ENCODE measurements at regions of chr6 and their contacts with region 1.

Region 1: GRCh38 chr6:134174672-134175198 is 122.3 kb upstream of the SLC2A12 start:
- DNase-seq: peak; percentile 94
- ATAC-seq: peak; percentile 81
- H3K4me3 Mint-ChIP-seq: peak overlapping the region; percentile 98
- H3K27ac Mint-ChIP-seq: peak overlapping the region; percentile 98
- H3K4me1 Mint-ChIP-seq: peaks cover 64% of the 10 kb centered on the region
- H3K27me3 Mint-ChIP-seq: no peaks in the 10 kb centered on the region
- CTCF ChIP-seq: no peak

Region 2: GRCh38 chr6:134185277-134185676 is 10.5 kb after region 1 on chr6:
- CTCF ChIA-PET with region 1: no interaction called
- POLR2A ChIA-PET with region 1: no interaction called
- intact Hi-C with region 1: no loop called
- DNase-seq: no peak
- ATAC-seq: no peak
- H3K4me3 Mint-ChIP-seq: no peak overlapping the region
- H3K27ac Mint-ChIP-seq: no peak overlapping the region
- H3K4me1 Mint-ChIP-seq: peaks cover 9% of the 10 kb centered on the region
- H3K27me3 Mint-ChIP-seq: no peaks in the 10 kb centered on the region
- CTCF ChIP-seq: no peak

Region 3: DNA sequence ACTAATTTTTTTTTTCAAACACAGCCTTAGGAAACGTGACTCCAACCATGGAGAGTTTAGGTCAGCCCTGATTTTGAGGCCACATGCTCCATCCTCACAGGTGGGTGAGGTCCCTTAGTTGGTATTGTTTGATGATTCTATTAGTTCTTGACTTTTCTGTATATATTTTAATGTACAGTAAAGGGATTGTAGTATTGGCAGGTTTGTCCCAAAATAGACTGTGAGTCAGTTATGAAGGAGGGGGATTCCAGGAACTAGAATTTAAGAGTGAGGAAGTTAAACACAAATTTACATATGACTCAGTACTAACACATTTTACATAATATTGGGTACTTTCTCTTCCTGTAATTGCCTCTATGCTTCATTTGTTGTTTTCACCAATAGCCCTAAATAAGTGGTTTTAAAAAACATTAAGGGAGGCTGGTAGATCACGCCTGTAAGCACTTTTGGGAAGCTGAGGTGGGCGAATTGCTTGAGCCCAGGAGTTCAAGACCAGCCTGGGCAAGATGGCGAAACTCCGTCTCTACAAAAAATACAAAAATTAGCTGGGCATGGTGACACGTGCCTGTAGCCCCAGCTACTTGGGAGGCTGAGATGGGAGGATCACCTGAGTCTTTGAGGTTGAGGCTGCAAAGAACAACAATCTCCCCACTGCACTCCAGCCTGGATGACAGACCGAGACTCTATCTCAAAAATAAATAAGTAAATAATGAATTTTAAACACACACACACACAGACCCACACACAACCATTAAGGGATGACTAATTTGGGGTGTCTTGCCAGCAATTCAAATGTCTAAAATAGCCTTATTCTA is 61.4 kb after region 1 on chr6:
- CTCF ChIA-PET with region 1: interaction called, 6 read pairs
- POLR2A ChIA-PET with region 1: interaction called, 3 read pairs
- intact Hi-C with region 1: loop called (anchors 2 kb)
- DNase-seq: peak; percentile 23
- ATAC-seq: peak; percentile 79
- H3K4me3 Mint-ChIP-seq: no peak overlapping the region
- H3K27ac Mint-ChIP-seq: peak overlapping the region; percentile 92
- H3K4me1 Mint-ChIP-seq: peaks cover 56% of the 10 kb centered on the region
- H3K27me3 Mint-ChIP-seq: no peaks in the 10 kb centered on the region
- CTCF ChIP-seq: no peak

Region 4: GRCh38 chr6:134288538-134289203 is 113.9 kb after region 1 on chr6:
- CTCF ChIA-PET with region 1: interaction called, 3 read pairs
- POLR2A ChIA-PET with region 1: no interaction called
- intact Hi-C with region 1: loop called (anchors 2 kb)
- DNase-seq: peak; percentile 31
- ATAC-seq: peak; percentile 81
- H3K4me3 Mint-ChIP-seq: peak overlapping the region; percentile 47
- H3K27ac Mint-ChIP-seq: peak overlapping the region; percentile 90
- H3K4me1 Mint-ChIP-seq: peaks cover 26% of the 10 kb centered on the region
- H3K27me3 Mint-ChIP-seq: no peaks in the 10 kb centered on the region
- CTCF ChIP-seq: no peak

Region 5: GRCh38 chr6:134436281-134436815 is 261.6 kb after region 1 on chr6:
- CTCF ChIA-PET with region 1: interaction called, 7 read pairs
- POLR2A ChIA-PET with region 1: no interaction called
- intact Hi-C with region 1: loop called (anchors 2 kb)
- DNase-seq: peak; percentile 87
- ATAC-seq: peak; percentile 91
- H3K4me3 Mint-ChIP-seq: peak overlapping the region; percentile 60
- H3K27ac Mint-ChIP-seq: peak overlapping the region; percentile 88
- H3K4me1 Mint-ChIP-seq: peaks cover 29% of the 10 kb centered on the region
- H3K27me3 Mint-ChIP-seq: no peaks in the 10 kb centered on the region
- CTCF ChIP-seq: no peak

Region 6: GRCh38 chr6:134640975-134641429 is 466.3 kb after region 1 on chr6:
- CTCF ChIA-PET with region 1: interaction called, 24 read pairs
- POLR2A ChIA-PET with region 1: interaction called, 3 read pairs
- intact Hi-C with region 1: loop called (anchors 1 kb)
- DNase-seq: peak; percentile 86
- ATAC-seq: peak; percentile 94
- H3K4me3 Mint-ChIP-seq: no peak overlapping the region
- H3K27ac Mint-ChIP-seq: no peak overlapping the region
- H3K4me1 Mint-ChIP-seq: peaks cover 15% of the 10 kb centered on the region
- H3K27me3 Mint-ChIP-seq: no peaks in the 10 kb centered on the region
- CTCF ChIP-seq: peak; percentile 94